Activated CD8-positive, alpha-beta memory T cell treated with anti-CD3 and anti-CD28 coated beads, Interleukin-2, amount 10 ng/mL, durations not matched to agents 7 days and 5 days (primary cell): ENCODE measurements at regions of chr1 and their contacts with region 1.

Region 1: GRCh38 chr1:66342707-66343106 is 191.2 kb upstream of the SGIP1 start:
- DNase-seq: no peak
- ATAC-seq: peak; percentile 32
- H3K4me3 Mint-ChIP-seq: peak overlapping the region; percentile 7
- H3K27ac Mint-ChIP-seq: peak overlapping the region; percentile 80
- H3K4me1 Mint-ChIP-seq: peaks cover 79% of the 10 kb centered on the region
- H3K27me3 Mint-ChIP-seq: no peaks in the 10 kb centered on the region

Region 2: DNA sequence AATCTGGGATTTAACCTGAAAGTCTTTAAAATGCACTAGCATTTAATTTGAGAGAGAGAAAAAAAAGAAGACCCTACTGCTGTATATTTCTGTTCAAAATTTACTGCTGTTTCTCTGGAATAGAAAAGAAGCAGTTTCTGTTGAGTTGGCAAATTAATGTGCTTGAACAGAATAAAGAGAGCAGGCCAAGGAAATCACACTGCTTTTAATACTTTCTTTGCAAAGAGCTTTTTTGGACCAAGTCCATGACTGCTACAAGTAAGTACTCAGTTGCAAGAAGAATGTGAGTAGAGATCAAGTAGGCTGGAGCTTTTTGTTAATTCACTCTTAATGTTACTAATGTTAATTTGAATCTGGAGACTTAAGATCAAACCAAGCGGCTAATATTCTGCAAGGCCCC is 144.9 kb before region 1 on chr1:
- CTCF ChIA-PET with region 1: no interaction called
- DNase-seq: no peak
- ATAC-seq: no peak
- H3K4me3 Mint-ChIP-seq: no peak overlapping the region
- H3K27ac Mint-ChIP-seq: no peak overlapping the region
- H3K4me1 Mint-ChIP-seq: no peaks in the 10 kb centered on the region
- H3K27me3 Mint-ChIP-seq: peaks cover 8% of the 10 kb centered on the region

Region 3: DNA sequence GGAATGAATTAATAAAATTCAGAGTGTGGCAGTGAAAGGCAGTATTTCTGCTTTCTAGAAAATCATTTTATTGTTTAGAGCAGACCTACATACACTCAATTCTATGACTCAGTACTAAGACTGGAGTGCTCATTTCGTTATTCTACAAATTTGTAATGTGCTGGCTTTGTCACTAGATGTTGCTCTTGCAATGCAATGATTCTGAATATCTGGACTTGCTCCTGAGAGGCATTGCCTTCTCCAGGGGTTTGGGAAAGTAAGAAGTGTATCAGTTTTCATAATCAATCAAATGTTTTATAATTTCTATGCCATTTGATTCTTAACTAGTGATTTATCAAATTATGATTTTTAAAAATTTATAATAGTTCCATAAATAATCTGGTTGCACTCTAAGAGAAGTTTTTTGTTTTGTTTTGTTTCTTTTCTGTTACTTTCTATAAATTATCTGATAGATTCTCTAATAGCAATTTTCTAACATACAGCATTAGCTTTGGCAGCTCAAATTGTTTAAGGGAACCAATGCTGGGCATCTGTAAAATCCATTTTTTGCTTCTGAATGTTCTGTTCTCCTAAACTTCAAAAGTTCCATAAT is 89.3 kb before region 1 on chr1:
- CTCF ChIA-PET with region 1: interaction called, 35 read pairs
- DNase-seq: no peak
- ATAC-seq: peak; percentile 87
- H3K4me3 Mint-ChIP-seq: no peak overlapping the region
- H3K27ac Mint-ChIP-seq: no peak overlapping the region
- H3K4me1 Mint-ChIP-seq: peaks cover 77% of the 10 kb centered on the region
- H3K27me3 Mint-ChIP-seq: no peaks in the 10 kb centered on the region

Region 4: DNA sequence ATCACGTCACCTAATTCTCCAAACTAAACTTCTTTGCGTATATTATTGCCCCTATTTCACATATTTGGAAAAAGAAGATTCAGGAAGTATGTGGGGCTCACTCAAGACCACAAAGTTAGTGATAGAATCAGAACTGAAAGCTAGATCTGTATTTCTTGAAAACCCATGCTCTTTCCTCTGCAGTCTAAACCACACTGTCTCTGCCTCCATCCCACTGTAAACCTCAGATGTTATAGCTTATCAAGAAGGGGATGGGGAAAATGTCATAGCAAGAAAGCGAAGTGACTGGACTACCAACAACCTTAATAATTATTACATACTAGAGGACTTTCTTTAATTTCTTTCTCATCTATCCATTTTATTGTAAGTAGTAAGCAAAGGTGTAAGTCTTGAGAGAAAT is 66.5 kb before region 1 on chr1:
- CTCF ChIA-PET with region 1: interaction called, 15 read pairs
- DNase-seq: peak; percentile 77
- ATAC-seq: peak; percentile 81
- H3K4me3 Mint-ChIP-seq: peak overlapping the region; percentile 52
- H3K27ac Mint-ChIP-seq: peak overlapping the region; percentile 79
- H3K4me1 Mint-ChIP-seq: peaks cover 93% of the 10 kb centered on the region
- H3K27me3 Mint-ChIP-seq: no peaks in the 10 kb centered on the region

Region 5: DNA sequence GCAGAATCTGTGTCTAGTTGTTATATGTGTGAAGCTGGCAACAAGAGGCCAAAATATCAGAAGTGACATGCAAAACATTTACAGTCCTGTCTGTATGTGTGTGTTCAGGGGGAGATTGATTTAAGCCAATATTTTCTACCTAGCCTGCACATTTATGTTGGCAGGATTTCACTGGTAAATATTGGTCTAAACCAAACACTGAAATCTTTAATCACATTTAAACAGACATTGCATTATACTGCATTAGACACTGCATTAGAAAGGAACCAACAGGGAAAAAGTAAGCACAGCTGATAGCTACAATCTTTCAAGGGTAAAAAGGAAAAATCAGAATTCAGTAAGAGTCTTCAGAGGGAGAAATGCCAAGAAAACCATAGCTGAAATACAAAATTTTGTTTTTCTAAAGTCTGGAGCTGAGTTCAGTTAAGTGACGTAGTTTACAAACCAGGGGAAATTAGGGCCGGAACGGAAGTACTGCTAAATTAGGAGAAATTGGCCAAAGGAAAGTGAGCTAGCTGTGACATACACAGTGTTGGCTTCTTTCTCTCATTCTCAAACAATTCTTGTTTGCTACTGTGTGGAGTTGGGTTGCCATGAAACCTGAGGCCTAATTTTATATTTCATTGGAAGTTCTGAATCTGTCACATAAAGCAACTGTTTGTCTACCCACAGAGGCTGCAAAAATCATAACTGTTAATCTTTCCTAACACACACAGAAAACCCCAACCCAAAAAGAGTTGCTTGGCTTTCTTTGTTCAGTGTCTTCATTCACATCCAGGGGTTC is 26.1 kb before region 1 on chr1:
- CTCF ChIA-PET with region 1: no interaction called
- DNase-seq: no peak
- ATAC-seq: no peak
- H3K4me3 Mint-ChIP-seq: no peak overlapping the region
- H3K27ac Mint-ChIP-seq: no peak overlapping the region
- H3K4me1 Mint-ChIP-seq: peaks cover 4% of the 10 kb centered on the region
- H3K27me3 Mint-ChIP-seq: no peaks in the 10 kb centered on the region